ENCODE measurements at regions of chr20 and their contacts with region 1.

Region 1: GRCh38 chr20:33460711-33461110 is 17.1 kb upstream of the SNTA1 start:
- DNase-seq: no peak
- ATAC-seq: peak; percentile 38
- H3K4me3 Mint-ChIP-seq: no peak overlapping the region
- H3K27ac Mint-ChIP-seq: no peak overlapping the region
- H3K4me1 Mint-ChIP-seq: peaks cover 15% of the 10 kb centered on the region
- H3K27me3 Mint-ChIP-seq: peaks cover 38% of the 10 kb centered on the region
- CTCF ChIP-seq: no peak

Region 2: GRCh38 chr20:33474097-33474873 is 13.6 kb after region 1 on chr20:
- CTCF ChIA-PET with region 1: interaction called, 11 read pairs
- POLR2A ChIA-PET with region 1: interaction called, 4 read pairs
- DNase-seq: no peak
- ATAC-seq: no peak
- H3K4me3 Mint-ChIP-seq: no peak overlapping the region
- H3K27ac Mint-ChIP-seq: no peak overlapping the region; the same call in 1 of the 2 replicates
- H3K4me1 Mint-ChIP-seq: peaks cover 43% of the 10 kb centered on the region
- H3K27me3 Mint-ChIP-seq: peaks cover 3% of the 10 kb centered on the region; the same call in 1 of the 2 replicates
- CTCF ChIP-seq: no peak

Region 3: GRCh38 chr20:33624399-33624798 is 163.7 kb after region 1 on chr20:
- CTCF ChIA-PET with region 1: interaction called, 12 read pairs
- POLR2A ChIA-PET with region 1: no interaction called
- DNase-seq: no peak
- ATAC-seq: no peak
- H3K4me3 Mint-ChIP-seq: no peak overlapping the region
- H3K27ac Mint-ChIP-seq: no peak overlapping the region
- H3K4me1 Mint-ChIP-seq: no peaks in the 10 kb centered on the region
- H3K27me3 Mint-ChIP-seq: no peaks in the 10 kb centered on the region
- CTCF ChIP-seq: no peak

Measured in WTC11 (cell line).